Uterus (tissue), 4 donors: ENCODE measurements at regions of chr5 and their contacts with region 1.

Region 1: DNA sequence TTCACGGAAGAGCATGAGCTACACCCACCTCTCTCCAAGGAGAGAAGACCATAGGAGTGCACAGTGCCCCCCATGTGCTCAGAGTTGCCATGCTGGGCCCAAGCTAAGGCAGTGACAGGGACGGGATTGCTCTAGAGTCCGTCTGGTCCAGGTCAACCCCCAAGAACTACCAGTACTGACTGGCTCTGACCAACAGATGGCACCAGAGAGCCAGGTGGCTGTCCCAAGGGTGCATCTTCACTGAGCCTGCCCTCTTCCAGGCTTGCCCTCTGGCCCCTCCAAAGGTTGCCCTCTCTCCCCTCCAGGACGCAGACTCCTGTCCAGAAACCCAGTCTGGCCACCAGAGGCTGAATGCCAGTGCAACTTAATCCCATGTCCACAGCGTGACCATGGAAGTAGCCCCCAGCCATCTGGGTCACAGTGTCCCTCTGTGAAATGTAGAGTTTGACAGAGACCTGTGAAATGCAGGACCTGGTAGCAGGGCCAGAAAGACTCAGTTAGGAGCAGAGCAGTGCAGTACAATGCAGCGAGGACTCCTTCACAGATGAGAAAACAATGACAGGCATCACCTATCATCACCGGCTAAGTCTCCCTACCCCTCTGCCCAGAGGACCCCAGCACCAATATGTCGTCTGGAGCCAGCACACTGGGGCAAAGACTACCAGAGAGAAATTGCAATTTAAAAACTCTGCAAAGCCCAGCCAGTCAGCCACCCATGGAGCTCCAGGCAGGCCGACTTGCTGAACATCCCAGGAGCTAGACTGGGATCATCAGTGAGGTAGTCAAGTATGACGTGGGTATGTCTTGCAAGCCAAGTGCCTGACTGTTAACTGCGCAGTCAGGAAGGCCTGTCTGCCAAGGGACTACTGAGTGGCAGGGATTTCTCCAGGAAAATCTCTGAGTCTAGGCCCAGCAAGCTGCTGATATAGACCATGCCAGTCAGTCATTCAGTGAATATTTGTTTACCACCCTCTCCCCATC is 7.7 kb upstream of the SKP1 start:
- DNase-seq: peak; percentile 63 to 66
- H3K4me3 ChIP-seq: no peak overlapping the region
- H3K27ac ChIP-seq: no peak overlapping the region
- H3K4me1 ChIP-seq: no peaks in the 10 kb centered on the region
- H3K27me3 ChIP-seq: no peaks in the 10 kb centered on the region
- CTCF ChIP-seq: peak; percentile 85 to 93 (median 89)
- POLR2A ChIP-seq: no peak

Region 2: DNA sequence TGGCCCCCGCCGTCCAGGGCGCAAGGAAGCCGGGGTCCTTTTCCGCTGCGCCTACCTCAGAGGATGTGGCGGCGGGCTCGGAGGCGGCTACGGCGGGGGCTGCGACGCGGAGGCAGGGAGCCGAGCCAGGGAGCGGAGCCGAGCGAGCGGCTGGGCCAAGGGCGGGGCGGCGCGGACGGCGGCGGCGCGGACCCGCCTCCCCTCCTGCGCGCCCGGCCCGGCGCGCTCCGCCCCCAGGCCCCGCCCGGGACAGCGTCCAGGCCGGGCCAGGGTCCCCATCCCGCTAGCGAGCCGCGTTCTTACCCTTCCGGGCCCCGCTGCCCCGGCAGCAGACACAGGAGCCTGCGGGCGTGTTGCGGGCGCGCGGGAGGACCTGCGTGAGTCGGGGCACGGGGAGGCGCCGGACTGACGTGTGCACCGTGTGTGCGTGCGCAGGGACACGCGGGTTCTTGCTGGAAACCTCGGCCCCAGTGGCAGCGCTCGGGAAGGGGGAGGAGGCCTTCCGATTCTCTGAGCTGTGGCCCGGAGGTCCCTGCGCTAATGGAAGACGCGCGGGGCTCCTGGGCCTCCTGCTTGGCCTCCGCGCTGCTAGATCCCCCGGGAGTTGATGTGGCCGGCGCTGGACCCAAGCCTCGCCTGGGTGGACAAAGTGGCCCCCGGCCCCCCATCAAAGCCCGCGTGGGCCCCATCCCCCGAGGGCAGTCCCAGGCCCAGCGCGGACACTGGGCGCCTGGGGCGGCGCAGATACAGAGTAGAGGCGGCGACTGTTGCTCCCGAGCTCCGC is 179.7 kb before region 1 on chr5 and contains the start of gene VDAC1:
- intact Hi-C with region 1: no loop called
- DNase-seq: peak; percentile 75 to 84
- H3K4me3 ChIP-seq: peak within 1 kb of the TSS; percentile 80 to 95
- H3K27ac ChIP-seq: peak within 1 kb of the TSS; percentile 98 to 100
- H3K4me1 ChIP-seq: peaks cover 0 to 13% of the 10 kb centered on the region in 2 donors
- H3K27me3 ChIP-seq: no peaks in the 10 kb centered on the region
- CTCF ChIP-seq: peak in 1 of 4 experiments; percentile 15
- POLR2A ChIP-seq: peak; percentile 28 to 81
- total RNA-seq, gene VDAC1: 19.4 to 112 (median 79.8) TPM

Region 3: GRCh38 chr5:134132372-134133034 is 51.9 kb before region 1 on chr5:
- intact Hi-C with region 1: no loop called
- DNase-seq: no peak
- H3K4me3 ChIP-seq: no peak overlapping the region
- H3K27ac ChIP-seq: no peak overlapping the region
- H3K4me1 ChIP-seq: no peaks in the 10 kb centered on the region
- H3K27me3 ChIP-seq: no peaks in the 10 kb centered on the region
- CTCF ChIP-seq: no peak
- POLR2A ChIP-seq: no peak

Region 4: GRCh38 chr5:134289509-134290113 is 105.2 kb after region 1 on chr5:
- intact Hi-C with region 1: loop called (anchors 5 kb)
- DNase-seq: peak; percentile 35 to 64
- H3K4me3 ChIP-seq: no peak overlapping the region
- H3K27ac ChIP-seq: no peak overlapping the region
- H3K4me1 ChIP-seq: no peaks in the 10 kb centered on the region
- H3K27me3 ChIP-seq: no peaks in the 10 kb centered on the region
- CTCF ChIP-seq: peak; percentile 62 to 90 (median 80)
- POLR2A ChIP-seq: no peak